HCT116 (cell line): ENCODE measurements at regions of chr17 and their contacts with region 1.

Region 1: DNA sequence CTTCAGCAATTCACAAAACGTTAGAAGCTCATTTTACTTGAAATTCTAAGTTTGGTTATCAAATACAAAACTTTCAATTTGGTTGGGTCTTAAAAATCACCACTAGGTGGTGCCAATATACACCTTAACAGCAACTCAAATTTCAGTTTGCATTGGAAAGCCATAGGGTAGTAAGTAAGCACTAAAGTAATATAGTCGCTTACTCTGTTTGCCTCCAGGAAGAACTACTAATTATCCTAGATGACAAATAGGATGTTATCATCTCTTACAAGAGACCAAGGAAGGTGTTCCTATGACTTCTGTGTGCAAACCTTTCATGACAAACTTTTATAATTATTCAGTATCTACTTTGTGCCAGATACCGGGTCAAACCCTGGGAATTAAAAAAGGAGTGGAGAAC is 93.3 kb downstream of the MYO1D start:
- DNase-seq: peak; percentile 39
- ATAC-seq: peak; percentile 59; the same call in 1 of the 2 replicates
- H3K4me3 ChIP-seq: no peak overlapping the region
- H3K27ac ChIP-seq: no peak overlapping the region
- H3K4me1 ChIP-seq: no peaks in the 10 kb centered on the region
- H3K27me3 ChIP-seq: no peaks in the 10 kb centered on the region
- CTCF ChIP-seq: peak; percentile 47 to 86 (median 75)
- POLR2A ChIP-seq: no peak
- RAD21 ChIP-seq: peak; percentile 84

Region 2: DNA sequence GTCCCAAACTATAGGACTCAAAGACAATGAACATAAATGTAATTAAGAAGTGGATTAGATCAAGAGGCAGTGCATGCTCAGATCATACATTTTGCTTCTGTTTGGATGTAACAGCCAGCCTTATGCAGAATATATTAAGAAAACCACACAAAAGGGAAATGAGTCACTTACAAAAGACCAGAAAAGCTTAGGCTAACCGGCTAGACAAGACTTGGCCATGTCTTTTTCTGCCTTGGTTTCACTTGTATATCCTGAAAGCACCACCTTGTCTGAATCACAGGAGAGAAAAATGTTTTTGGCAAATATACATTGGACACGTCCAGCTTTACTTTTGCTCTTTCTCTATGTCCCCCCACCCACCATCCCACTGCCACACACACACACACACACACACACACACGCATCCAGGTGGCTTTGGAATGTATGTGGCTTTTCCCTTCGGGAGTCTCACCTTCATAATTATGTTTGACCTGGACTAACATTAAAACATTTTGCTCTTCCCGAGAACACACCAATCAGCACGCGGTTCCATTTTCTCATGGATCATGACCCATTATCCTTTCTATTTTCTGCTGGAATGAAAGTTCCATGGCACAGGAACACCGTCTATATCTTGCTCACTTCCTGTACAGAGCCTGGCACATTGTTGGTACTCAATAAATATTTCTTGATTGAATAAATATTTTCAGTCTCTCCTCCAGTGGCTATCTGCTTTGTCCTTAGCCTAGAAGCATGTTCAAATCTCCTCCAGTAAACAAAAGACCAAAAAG is 232.2 kb before region 1 on chr17:
- CTCF ChIA-PET with region 1: no interaction called
- POLR2A ChIA-PET with region 1: no interaction called
- RAD21 ChIA-PET with region 1: no interaction called
- intact Hi-C with region 1: no loop called
- DNase-seq: no peak
- ATAC-seq: no peak
- H3K4me3 ChIP-seq: no peak overlapping the region
- H3K27ac ChIP-seq: no peak overlapping the region
- H3K4me1 ChIP-seq: peaks cover 0 to 9% of the 10 kb centered on the region in 2 experiments; a peak in 1 of 4 replicates
- H3K27me3 ChIP-seq: no peaks in the 10 kb centered on the region
- CTCF ChIP-seq: no peak
- POLR2A ChIP-seq: no peak
- RAD21 ChIP-seq: no peak

Region 3: DNA sequence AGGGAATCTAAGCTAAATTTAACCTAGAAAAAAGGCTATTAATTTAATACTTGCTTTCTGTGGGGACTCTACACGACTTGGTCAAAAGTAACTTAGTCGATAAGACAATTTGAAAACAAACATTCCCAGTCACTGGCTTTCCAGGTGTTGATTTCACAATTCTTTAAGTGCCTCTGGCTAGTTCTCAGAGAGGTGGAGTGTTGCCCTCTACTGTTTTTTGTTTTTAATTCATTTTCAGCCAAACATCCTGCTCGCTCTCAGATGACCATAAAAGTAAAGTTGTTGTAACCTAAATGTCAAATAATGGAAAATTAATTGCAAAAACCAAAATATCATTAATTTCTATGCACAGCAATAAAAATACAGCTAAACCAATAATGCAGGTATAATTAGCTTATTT is 13.8 kb before region 1 on chr17:
- CTCF ChIA-PET with region 1: interaction called, 17 read pairs
- POLR2A ChIA-PET with region 1: no interaction called
- RAD21 ChIA-PET with region 1: no interaction called
- intact Hi-C with region 1: no loop called
- DNase-seq: no peak
- ATAC-seq: no peak
- H3K4me3 ChIP-seq: no peak overlapping the region
- H3K27ac ChIP-seq: no peak overlapping the region
- H3K4me1 ChIP-seq: no peaks in the 10 kb centered on the region
- H3K27me3 ChIP-seq: no peaks in the 10 kb centered on the region
- CTCF ChIP-seq: peak in 1 of 3 experiments; percentile 19; a peak in 1 of 6 replicates
- POLR2A ChIP-seq: no peak
- RAD21 ChIP-seq: no peak

Region 4: DNA sequence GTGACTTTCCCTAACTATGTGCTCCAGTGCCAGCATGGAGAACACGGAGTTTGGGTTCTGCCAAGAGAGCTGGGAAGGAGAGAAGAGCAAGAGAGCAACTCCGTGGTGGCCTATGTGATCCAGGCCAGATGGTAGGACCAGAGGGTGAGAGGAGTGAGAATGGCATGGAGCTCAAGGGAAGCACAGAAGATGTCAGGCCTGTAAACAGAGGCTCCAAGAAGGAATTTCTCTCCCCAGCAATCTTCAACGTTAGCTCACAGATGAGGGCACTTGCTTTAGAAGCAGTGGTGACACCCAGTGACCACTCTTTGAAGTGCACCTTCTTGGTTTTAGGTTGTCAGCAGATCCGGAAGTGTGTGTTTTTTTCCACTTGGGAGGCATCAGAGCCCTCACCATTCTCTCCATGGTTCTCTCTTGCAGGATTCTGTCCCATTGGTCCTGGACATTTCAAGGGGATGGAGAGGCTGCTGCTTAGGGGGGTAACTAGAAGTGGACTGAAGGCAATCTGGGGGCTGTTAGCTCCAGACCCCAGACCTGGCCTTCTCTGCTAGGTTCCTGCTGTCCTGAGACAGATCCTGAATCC is 126.3 kb after region 1 on chr17:
- CTCF ChIA-PET with region 1: interaction called, 46 read pairs
- POLR2A ChIA-PET with region 1: no interaction called
- RAD21 ChIA-PET with region 1: interaction called in 1 of 2 experiments, 4 read pairs
- intact Hi-C with region 1: loop called (anchors 1 kb)
- DNase-seq: peak; percentile 78
- ATAC-seq: peak; percentile 91
- H3K4me3 ChIP-seq: no peak overlapping the region
- H3K27ac ChIP-seq: no peak overlapping the region
- H3K4me1 ChIP-seq: peaks cover 0 to 6% of the 10 kb centered on the region in 2 experiments; a peak in 2 of 4 replicates
- H3K27me3 ChIP-seq: no peaks in the 10 kb centered on the region
- CTCF ChIP-seq: peak; percentile 60 to 76 (median 75); a peak in 5 of 6 replicates
- POLR2A ChIP-seq: no peak
- RAD21 ChIP-seq: peak; percentile 73

Region 5: DNA sequence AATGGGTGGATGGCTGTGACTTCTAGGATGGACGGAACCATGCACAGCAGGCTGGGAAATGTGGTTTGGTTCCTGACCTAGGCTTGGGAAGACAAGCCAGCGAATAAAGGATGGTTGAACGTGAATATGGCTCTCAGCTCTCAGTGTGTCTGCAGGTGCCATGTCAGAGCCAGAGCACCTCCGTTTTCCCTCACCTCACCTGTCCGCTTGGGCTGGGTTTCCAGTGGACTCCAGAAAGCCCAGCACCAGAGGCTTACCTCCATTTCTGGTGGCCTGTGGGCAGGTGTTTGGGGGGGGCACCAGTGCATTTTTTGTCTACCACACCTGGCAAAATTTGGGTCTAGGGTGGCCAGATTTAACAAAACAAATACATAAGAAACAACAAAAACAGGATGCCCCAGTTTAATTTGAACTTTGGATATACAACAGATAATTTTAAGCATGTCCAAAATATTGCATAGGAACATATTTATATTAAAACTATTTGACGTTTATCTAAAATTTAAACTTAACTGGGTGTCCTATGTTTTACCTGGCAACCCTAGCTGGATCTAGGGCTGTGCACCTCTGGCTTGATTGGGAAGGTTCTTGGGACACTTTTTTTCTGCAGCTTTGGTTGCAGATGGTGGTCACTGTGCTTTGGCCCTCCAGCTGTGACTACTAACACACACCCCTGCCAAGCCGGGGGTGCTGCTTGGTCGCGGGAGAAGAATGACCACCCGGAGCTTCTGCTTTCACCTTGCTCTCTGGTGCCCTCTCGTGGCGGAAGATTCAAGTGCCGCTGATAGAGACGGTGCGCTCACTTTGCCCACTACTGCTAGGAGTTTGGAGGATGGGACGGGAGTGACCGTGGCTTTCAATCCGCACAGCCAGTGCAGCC is 214.4 kb after region 1 on chr17:
- CTCF ChIA-PET with region 1: interaction called, 22 read pairs
- POLR2A ChIA-PET with region 1: interaction called, 4 read pairs
- RAD21 ChIA-PET with region 1: interaction called in 1 of 2 experiments, 3 read pairs
- intact Hi-C with region 1: loop called (anchors 1 kb)
- DNase-seq: peak; percentile 55
- ATAC-seq: peak; percentile 96
- H3K4me3 ChIP-seq: peak overlapping the region; percentile 28 to 30
- H3K27ac ChIP-seq: no peak overlapping the region
- H3K4me1 ChIP-seq: peaks cover 3 to 11% of the 10 kb centered on the region in 2 experiments; a peak in 2 of 4 replicates
- H3K27me3 ChIP-seq: no peaks in the 10 kb centered on the region
- CTCF ChIP-seq: peak; percentile 40 to 89 (median 86); a peak in 5 of 6 replicates
- POLR2A ChIP-seq: no peak
- RAD21 ChIP-seq: peak; percentile 60

Region 6: DNA sequence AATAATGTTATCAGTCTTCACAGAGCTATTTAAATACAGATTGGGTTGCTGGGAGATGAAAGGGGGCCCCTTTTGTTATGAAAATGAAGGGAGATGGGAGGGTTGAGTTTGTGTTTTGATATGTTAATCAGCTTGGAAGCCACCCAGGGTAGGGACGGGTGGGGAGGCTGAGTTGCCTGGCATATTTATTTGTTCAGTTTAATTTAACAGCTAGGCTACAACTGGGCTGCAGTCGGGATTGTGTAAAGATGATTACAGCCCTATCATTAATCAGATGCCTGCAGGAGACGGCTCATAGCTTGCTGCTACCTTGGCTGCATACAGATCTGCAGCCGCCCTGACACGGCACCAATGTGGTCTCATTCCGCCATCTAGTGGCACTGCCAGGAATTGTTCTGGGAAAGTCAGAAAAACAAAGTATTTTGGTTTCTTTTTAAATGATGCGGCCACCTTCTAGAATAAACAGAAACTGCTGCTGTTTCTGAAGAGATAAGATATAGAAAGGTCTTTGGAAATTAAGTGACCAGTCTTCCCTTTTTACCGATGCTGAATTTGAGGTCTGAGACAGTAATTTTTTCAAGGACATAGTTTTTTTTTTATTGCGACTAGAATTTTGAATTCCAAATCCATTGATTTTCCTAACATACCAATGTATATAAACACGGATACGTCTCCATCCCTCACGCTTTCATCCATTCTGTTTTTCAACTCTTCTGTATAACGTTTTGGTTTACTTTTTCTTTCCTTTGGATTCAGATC is 967.5 kb after region 1 on chr17:
- CTCF ChIA-PET with region 1: no interaction called
- POLR2A ChIA-PET with region 1: no interaction called
- RAD21 ChIA-PET with region 1: no interaction called
- intact Hi-C with region 1: loop called (anchors 10 kb)
- DNase-seq: peak; percentile 7
- ATAC-seq: peak; percentile 58; the same call in 1 of the 2 replicates
- H3K4me3 ChIP-seq: no peak overlapping the region
- H3K27ac ChIP-seq: no peak overlapping the region
- H3K4me1 ChIP-seq: no peaks in the 10 kb centered on the region
- H3K27me3 ChIP-seq: no peaks in the 10 kb centered on the region
- CTCF ChIP-seq: peak; percentile 42 to 87 (median 72); a peak in 5 of 6 replicates
- POLR2A ChIP-seq: no peak
- RAD21 ChIP-seq: peak; percentile 68